ENCODE measurements at regions of chr11 and their contacts with region 1.

Region 1: DNA sequence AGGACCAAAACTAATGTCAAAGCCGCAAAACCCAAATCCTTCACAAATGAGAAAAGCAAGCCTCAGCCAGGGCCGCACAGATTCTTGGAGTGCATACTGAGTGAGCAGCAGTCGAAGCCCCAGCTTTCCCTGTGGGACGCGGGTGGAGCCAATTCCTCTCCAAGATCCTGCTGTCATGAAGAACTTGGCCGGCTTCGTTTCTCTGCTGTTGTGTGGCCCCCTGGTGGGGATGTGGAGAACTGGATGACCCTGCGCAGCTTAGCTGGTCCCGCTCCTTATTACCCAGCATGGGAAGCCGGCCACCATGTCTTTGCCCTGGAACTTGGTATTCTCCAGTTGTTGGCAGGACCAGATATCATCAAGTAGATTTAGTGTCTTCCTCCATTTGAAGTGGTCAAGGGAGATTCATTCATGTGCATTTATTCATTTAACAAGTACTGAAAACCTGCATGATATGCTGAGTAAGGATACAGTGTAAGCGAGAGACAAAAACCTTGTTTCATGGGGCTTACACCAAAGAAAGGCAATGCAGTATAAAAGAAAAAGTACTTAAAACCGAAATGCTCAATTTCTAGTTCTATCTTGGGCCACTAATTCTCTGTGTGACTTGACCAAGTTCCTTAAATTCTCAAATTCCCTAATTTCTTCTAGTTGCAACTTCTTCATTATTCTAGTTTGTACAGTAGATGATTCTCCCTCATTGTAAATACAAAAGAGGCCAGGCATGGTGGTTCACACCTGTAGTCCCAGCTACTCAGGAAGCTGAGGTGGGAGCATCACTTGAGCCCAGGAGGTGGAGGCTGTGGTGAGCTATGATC is 56.7 kb upstream of the CRTAM start:
- DNase-seq: peak; percentile 84
- H3K4me3 ChIP-seq: no peak overlapping the region; a peak in 1 of 4 replicates
- H3K27ac ChIP-seq: peak overlapping the region in 1 of 2 experiments; percentile 25; a peak in 1 of 4 replicates
- H3K4me1 ChIP-seq: peaks cover 12 to 30% of the 10 kb centered on the region in 2 experiments; a peak in 3 of 4 replicates
- H3K27me3 ChIP-seq: no peaks in the 10 kb centered on the region
- CTCF ChIP-seq: peak; percentile 94
- EP300 ChIP-seq: no peak
- RAD21 ChIP-seq: peak; percentile 96

Region 2: DNA sequence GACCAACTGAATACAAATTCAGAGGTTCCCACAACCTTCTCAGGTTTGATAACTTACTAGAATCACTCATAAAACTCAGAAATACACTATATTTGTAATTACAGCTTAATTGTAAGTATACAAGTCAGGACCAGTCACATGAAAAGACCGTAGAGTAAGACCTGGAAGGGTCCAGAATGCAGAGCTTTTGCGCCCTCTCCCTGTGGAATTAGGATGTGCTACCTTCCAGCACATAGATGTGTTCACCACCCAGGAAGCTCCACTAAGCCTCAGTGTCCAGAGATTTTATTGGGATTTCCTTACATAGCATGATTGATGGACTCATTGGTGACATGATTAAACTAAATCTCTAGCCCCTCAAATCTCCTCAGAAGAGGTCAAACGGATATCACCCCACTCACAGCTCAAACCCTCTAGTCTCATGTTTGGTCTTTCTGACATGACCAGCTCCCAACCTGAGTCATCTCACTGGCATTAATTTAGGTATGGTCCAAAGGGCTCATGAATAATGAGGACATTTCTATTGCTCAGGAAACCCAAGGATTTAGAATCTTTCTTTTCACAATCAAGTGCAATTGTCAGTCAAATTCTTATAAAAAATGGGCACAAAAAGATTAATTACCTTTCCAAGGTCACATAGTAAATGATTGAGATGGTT is 203.3 kb before region 1 on chr11:
- CTCF ChIA-PET with region 1: interaction called, 16 read pairs
- POLR2A ChIA-PET with region 1: no interaction called
- DNase-seq: no peak
- H3K4me3 ChIP-seq: no peak overlapping the region
- H3K27ac ChIP-seq: no peak overlapping the region
- H3K4me1 ChIP-seq: peaks cover 0 to 2% of the 10 kb centered on the region in 2 experiments; a peak in 1 of 4 replicates
- H3K27me3 ChIP-seq: no peaks in the 10 kb centered on the region
- CTCF ChIP-seq: peak; percentile 36
- EP300 ChIP-seq: no peak
- RAD21 ChIP-seq: peak; percentile 34

Region 3: GRCh38 chr11:122637541-122637940 is 144.0 kb before region 1 on chr11:
- CTCF ChIA-PET with region 1: interaction called, 62 read pairs
- POLR2A ChIA-PET with region 1: no interaction called
- DNase-seq: no peak
- H3K4me3 ChIP-seq: no peak overlapping the region
- H3K27ac ChIP-seq: no peak overlapping the region
- H3K4me1 ChIP-seq: peaks cover 0 to 4% of the 10 kb centered on the region in 2 experiments; a peak in 1 of 4 replicates
- H3K27me3 ChIP-seq: no peaks in the 10 kb centered on the region
- CTCF ChIP-seq: no peak
- EP300 ChIP-seq: no peak
- RAD21 ChIP-seq: no peak

Region 4: GRCh38 chr11:122655527-122656072 is 126.0 kb before region 1 on chr11 and contains the start of gene UBASH3B:
- CTCF ChIA-PET with region 1: interaction called, 33 read pairs
- POLR2A ChIA-PET with region 1: no interaction called
- DNase-seq: peak; percentile 85
- H3K4me3 ChIP-seq: peak within 1 kb of the TSS; percentile 75 to 91
- H3K27ac ChIP-seq: peak within 1 kb of the TSS; percentile 72 to 88
- H3K4me1 ChIP-seq: peaks cover 0 to 10% of the 10 kb centered on the region in 2 experiments; a peak in 1 of 4 replicates
- H3K27me3 ChIP-seq: no peaks in the 10 kb centered on the region
- CTCF ChIP-seq: no peak
- EP300 ChIP-seq: no peak
- RAD21 ChIP-seq: no peak
- polyA plus RNA-seq, gene UBASH3B: 10.4 and 11.0 TPM in 2 replicates

Region 5: DNA sequence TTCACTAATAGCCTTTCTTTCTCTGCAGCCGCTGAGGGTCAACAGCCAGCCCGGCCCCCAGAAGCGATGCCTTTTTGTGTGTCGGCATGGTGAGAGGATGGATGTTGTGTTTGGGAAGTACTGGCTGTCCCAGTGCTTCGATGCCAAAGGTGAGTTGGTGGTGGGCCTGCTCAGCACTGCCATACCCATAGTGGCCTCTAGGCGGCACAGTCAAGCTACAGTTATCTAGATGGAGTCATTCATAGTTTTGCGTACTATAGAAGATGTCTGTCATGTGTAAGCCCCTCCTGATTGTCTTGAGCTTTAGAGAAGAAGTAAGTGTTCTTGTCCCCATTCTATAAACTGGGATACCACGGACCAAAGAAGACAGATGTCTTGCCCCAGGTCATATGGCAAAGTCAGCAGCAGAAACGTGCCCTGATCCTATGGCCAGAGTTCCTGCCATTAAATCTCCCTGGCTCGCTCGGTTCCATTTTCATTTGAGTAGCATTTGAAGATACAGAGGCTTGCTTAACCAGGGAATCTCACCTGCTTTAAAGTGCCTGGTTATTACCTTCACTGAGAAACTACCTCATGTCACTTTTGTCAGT is 14.6 kb after region 1 on chr11:
- CTCF ChIA-PET with region 1: interaction called, 17 read pairs
- POLR2A ChIA-PET with region 1: no interaction called
- DNase-seq: peak; percentile 43
- H3K4me3 ChIP-seq: no peak overlapping the region
- H3K27ac ChIP-seq: no peak overlapping the region
- H3K4me1 ChIP-seq: peaks cover 0 to 8% of the 10 kb centered on the region in 2 experiments; a peak in 2 of 4 replicates
- H3K27me3 ChIP-seq: no peaks in the 10 kb centered on the region
- CTCF ChIP-seq: peak; percentile 81
- EP300 ChIP-seq: no peak
- RAD21 ChIP-seq: peak; percentile 63

Measured in SK-N-SH (cell line).